Activated CD8-positive, alpha-beta T cell treated with anti-CD3 and anti-CD28 coated beads for 36 hours (primary cell): ENCODE measurements at regions of chr20 and their contacts with region 1.

Region 1: GRCh38 chr20:31951530-31952453 is at the start of gene PDRG1:
- DNase-seq: peak; percentile 98
- ATAC-seq: peak; percentile 99
- H3K4me3 Mint-ChIP-seq: peak within 1 kb of the TSS; percentile 91
- H3K27ac Mint-ChIP-seq: peak within 1 kb of the TSS; percentile 91
- H3K4me1 Mint-ChIP-seq: peaks cover 25% of the 10 kb centered on the region
- H3K27me3 Mint-ChIP-seq: peaks cover 6% of the 10 kb centered on the region
- CTCF ChIP-seq: peak; percentile 93
- total RNA-seq, gene PDRG1: 17.7 to 18.3 TPM

Region 2: DNA sequence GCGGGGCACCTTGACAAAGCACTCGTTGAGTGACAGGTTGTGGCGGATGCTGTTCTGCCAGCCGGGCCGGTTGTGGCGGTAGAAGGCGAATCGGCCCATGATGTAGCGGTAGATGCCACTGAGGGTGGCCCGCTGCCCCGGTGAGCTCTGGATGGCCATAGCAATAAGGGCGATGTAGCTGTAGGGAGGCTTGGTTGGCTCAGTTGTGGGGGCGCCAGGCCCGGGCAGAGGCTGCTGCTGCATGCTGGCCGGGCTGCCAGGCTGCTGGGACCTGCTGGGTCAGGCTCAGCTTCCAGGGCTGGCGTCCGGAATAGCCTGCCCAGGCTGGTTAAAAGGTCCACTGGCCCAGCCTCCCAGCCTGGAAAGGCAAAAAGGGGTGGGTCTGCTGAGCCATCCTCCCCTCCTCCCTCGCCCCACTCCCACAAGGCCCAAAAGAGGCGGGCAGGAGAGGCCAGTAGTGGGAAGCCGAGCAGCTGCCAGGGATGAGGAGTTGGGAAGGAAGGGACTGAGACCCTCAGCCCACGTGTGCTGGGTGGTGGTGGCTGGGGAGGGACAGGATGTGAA is 106.4 kb before region 1 on chr20 and contains the start of gene FOXS1:
- CTCF ChIA-PET with region 1: interaction called, 106 read pairs
- POLR2A ChIA-PET with region 1: no interaction called
- intact Hi-C with region 1: no loop called
- DNase-seq: no peak
- ATAC-seq: no peak
- H3K4me3 Mint-ChIP-seq: no peak within 1 kb of the TSS
- H3K27ac Mint-ChIP-seq: no peak within 1 kb of the TSS
- H3K4me1 Mint-ChIP-seq: no peaks in the 10 kb centered on the region
- H3K27me3 Mint-ChIP-seq: peaks cover 9% of the 10 kb centered on the region
- CTCF ChIP-seq: no peak
- total RNA-seq, gene FOXS1: not detected

Region 3: DNA sequence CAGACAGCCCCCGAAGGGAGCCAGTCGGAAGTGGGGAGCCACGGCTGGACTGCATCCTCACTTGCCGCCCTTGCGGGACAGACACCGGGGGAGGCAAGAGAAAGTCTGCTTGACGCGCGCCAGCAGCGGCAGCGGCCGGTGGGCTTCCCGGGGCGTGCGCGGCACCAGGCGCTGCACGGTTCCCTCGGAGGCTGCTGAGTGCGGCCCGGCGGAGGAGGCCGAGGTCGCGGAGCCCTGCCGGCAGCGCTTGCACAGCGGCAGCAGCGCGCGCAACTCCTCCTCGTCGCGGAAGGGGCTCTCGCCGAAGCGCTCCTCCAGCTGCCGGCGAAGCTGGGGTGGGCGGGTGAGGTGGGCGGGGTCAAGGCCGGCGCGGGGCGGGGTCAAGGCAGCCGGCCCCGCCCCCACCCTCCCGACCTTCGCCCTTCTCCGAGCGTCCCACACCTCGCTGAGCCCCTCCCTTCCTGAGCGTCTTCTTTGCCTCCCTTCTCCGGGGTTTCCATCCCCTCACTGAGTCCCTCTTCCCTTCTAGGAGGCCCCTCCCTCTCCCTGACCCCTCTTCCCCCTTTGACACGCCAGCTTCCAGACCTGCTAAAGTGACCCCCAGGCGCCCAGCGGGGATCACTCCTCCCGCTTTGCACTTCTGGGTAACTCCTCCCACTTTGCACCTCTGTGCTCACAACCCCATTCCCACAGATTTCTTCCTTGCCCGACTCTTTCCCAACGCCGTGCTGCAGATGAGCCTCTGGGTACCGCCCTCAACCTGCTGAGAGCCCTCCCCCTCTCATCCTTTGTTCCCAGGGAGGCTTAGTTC is 90.2 kb before region 1 on chr20:
- CTCF ChIA-PET with region 1: interaction called, 106 read pairs
- POLR2A ChIA-PET with region 1: interaction called, 3 read pairs
- intact Hi-C with region 1: no loop called
- DNase-seq: peak; percentile 78
- ATAC-seq: peak; percentile 97
- H3K4me3 Mint-ChIP-seq: peak overlapping the region; percentile 33
- H3K27ac Mint-ChIP-seq: no peak overlapping the region
- H3K4me1 Mint-ChIP-seq: peaks cover 4% of the 10 kb centered on the region
- H3K27me3 Mint-ChIP-seq: peaks cover 24% of the 10 kb centered on the region
- CTCF ChIP-seq: no peak

Region 4: GRCh38 chr20:31879143-31879987 is 72.4 kb before region 1 on chr20:
- CTCF ChIA-PET with region 1: interaction called, 27 read pairs
- POLR2A ChIA-PET with region 1: interaction called, 10 read pairs
- intact Hi-C with region 1: no loop called
- DNase-seq: peak; percentile 88
- ATAC-seq: peak; percentile 90
- H3K4me3 Mint-ChIP-seq: peak overlapping the region; percentile 78
- H3K27ac Mint-ChIP-seq: peak overlapping the region; percentile 75
- H3K4me1 Mint-ChIP-seq: peaks cover 2% of the 10 kb centered on the region
- H3K27me3 Mint-ChIP-seq: peaks cover 4% of the 10 kb centered on the region
- CTCF ChIP-seq: no peak

Region 5: DNA sequence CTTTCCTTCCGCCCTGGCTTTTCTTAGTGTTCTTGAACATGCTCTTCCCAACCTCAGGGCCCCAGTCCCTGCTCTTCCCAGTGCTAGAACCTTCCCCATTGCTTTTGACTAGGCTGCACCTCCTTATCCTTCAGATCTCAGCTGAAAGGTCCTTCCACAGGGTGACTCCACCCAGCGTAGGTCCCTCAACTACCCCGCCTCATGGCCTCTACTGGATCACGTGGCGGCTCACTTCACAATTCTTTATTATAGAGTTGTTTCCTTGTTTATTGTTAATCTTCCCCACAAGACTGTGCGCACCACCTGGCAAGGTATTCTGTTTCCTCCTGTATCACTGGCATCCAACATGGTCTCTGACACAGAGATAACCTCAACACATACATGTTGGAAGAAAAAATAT is 50.2 kb before region 1 on chr20:
- CTCF ChIA-PET with region 1: no interaction called
- POLR2A ChIA-PET with region 1: no interaction called
- intact Hi-C with region 1: no loop called
- DNase-seq: no peak
- ATAC-seq: no peak
- H3K4me3 Mint-ChIP-seq: no peak overlapping the region
- H3K27ac Mint-ChIP-seq: no peak overlapping the region
- H3K4me1 Mint-ChIP-seq: no peaks in the 10 kb centered on the region
- H3K27me3 Mint-ChIP-seq: peaks cover 3% of the 10 kb centered on the region
- CTCF ChIP-seq: no peak

Region 6: GRCh38 chr20:31968291-31969126 is 16.7 kb after region 1 on chr20:
- CTCF ChIA-PET with region 1: interaction called, 18 read pairs
- POLR2A ChIA-PET with region 1: interaction called, 3 read pairs
- intact Hi-C with region 1: no loop called
- DNase-seq: peak; percentile 83
- ATAC-seq: peak; percentile 96
- H3K4me3 Mint-ChIP-seq: peak overlapping the region; percentile 73
- H3K27ac Mint-ChIP-seq: no peak overlapping the region
- H3K4me1 Mint-ChIP-seq: peaks cover 3% of the 10 kb centered on the region
- H3K27me3 Mint-ChIP-seq: peaks cover 42% of the 10 kb centered on the region
- CTCF ChIP-seq: no peak